Calu3 (cell line): ENCODE measurements at regions of chr12 and their contacts with region 1.

Region 1: GRCh38 chr12:49397000-49397399 is 29.7 kb downstream of the SPATS2 start:
- DNase-seq: no peak
- H3K4me3 Mint-ChIP-seq: no peak overlapping the region
- H3K27ac Mint-ChIP-seq: no peak overlapping the region
- H3K4me1 Mint-ChIP-seq: peaks cover 3% of the 10 kb centered on the region
- H3K27me3 Mint-ChIP-seq: no peaks in the 10 kb centered on the region
- CTCF ChIP-seq: no peak

Region 2: DNA sequence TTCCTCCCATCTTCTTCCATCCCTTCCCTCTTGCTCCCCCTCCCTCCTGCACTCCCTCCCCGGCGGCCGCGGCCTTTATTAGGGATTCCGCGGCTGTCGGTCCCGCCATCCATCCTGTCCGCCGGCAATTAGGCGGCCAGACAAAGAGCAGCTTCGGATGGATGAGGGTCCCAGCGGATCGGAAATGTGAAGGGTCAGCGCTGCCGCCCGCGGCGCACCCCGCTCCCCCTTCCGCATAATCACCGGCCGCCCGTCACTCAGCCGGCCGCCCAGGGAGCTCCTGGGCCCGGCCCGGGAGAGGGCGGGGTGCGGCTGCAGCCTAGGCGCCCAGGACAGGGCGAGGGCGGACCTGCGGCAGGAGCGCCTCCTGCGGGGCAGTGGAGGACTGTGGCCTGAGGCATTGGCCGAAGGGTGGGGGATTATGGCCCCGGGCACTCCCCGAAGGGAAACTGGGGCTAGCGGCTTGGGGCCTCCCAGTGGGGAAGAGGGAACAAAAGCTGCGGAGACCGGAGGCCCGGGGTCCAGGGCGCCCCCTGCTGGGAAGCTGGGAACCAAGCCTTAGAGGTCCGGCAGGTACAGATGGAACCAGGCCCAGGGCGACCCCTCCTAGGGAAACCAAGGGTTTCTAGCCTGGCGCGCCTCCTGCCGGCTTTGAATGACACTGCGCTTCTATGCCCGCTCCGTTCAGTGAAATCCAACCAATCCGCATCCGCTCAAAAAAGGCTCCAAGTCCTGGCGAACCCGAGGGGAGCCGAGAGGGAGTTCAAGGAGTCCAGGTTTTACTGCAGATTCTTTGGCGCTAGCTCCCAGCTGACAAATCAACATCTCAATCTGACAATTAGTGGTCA is 54.7 kb before region 1 on chr12:
- CTCF ChIA-PET with region 1: no interaction called
- intact Hi-C with region 1: no loop called
- DNase-seq: peak; percentile 79
- H3K4me3 Mint-ChIP-seq: no peak overlapping the region
- H3K27ac Mint-ChIP-seq: no peak overlapping the region
- H3K4me1 Mint-ChIP-seq: peaks cover 42% of the 10 kb centered on the region
- H3K27me3 Mint-ChIP-seq: peaks cover 77% of the 10 kb centered on the region
- CTCF ChIP-seq: peak; percentile 79

Region 3: GRCh38 chr12:49440035-49440434 is 43.0 kb after region 1 on chr12:
- CTCF ChIA-PET with region 1: no interaction called
- intact Hi-C with region 1: loop called (anchors 10 kb)
- DNase-seq: no peak
- H3K4me3 Mint-ChIP-seq: no peak overlapping the region
- H3K27ac Mint-ChIP-seq: no peak overlapping the region
- H3K4me1 Mint-ChIP-seq: peaks cover 10% of the 10 kb centered on the region
- H3K27me3 Mint-ChIP-seq: no peaks in the 10 kb centered on the region
- CTCF ChIP-seq: no peak